Activated naive CD4-positive, alpha-beta T cell treated with anti-CD3 and anti-CD28 coated beads for 36 hours (primary cell): ENCODE measurements at regions of chr2 and their contacts with region 1.

Region 1: GRCh38 chr2:218269899-218270720 is at the starts of genes AAMP and PNKD:
- DNase-seq: peak; percentile 100
- H3K4me3 Mint-ChIP-seq: peak within 1 kb of the TSS; percentile 80
- H3K27ac Mint-ChIP-seq: peak within 1 kb of the TSS; percentile 87
- H3K4me1 Mint-ChIP-seq: peaks cover 42% of the 10 kb centered on the region
- H3K27me3 Mint-ChIP-seq: no peaks in the 10 kb centered on the region
- total RNA-seq, gene AAMP: 58.7 to 59.4 TPM
- total RNA-seq, gene PNKD: 20.4 to 21.4 TPM

Region 2: DNA sequence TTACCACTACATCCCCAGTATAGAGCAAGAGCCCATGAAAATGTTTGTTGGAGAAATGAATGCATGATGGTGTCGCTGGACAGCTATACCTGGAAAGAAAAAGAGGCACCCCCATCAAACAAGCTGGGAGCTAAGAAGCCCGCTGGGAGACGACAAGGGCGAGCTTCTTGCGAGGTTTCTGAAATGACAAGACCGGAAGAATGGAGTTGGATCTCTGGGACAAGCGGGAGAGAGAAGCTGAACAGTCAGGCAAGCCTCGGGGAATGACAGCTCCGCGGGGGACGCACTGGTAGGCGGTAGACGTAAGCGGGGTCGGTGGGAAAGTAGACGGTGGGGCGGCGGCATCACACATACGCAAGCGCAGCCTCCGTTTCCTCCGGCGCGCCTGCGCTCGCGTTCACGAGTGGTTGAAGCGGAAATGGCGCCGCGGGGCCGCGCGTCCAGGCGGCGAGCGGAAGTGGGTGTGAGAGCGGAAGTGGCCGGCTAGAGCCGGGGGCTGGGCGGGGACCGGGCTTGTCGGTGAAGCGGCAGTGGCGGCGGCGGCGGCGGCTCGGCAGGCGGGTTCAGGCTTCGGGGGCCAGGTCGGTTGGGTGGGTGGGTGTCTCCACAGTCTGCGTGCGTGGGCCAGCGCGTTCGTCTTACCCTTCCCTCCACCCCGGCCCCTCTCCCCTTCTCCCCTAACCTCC is 53.3 kb before region 1 on chr2 and contains the start of gene ARPC2:
- CTCF ChIA-PET with region 1: interaction called, 7 read pairs
- intact Hi-C with region 1: loop called (anchors 1 kb)
- DNase-seq: peak; percentile 95
- H3K4me3 Mint-ChIP-seq: peak within 1 kb of the TSS; percentile 78
- H3K27ac Mint-ChIP-seq: peak within 1 kb of the TSS; percentile 88
- H3K4me1 Mint-ChIP-seq: peaks cover 29% of the 10 kb centered on the region
- H3K27me3 Mint-ChIP-seq: no peaks in the 10 kb centered on the region
- total RNA-seq, gene ARPC2: 461 to 475 TPM

Region 3: DNA sequence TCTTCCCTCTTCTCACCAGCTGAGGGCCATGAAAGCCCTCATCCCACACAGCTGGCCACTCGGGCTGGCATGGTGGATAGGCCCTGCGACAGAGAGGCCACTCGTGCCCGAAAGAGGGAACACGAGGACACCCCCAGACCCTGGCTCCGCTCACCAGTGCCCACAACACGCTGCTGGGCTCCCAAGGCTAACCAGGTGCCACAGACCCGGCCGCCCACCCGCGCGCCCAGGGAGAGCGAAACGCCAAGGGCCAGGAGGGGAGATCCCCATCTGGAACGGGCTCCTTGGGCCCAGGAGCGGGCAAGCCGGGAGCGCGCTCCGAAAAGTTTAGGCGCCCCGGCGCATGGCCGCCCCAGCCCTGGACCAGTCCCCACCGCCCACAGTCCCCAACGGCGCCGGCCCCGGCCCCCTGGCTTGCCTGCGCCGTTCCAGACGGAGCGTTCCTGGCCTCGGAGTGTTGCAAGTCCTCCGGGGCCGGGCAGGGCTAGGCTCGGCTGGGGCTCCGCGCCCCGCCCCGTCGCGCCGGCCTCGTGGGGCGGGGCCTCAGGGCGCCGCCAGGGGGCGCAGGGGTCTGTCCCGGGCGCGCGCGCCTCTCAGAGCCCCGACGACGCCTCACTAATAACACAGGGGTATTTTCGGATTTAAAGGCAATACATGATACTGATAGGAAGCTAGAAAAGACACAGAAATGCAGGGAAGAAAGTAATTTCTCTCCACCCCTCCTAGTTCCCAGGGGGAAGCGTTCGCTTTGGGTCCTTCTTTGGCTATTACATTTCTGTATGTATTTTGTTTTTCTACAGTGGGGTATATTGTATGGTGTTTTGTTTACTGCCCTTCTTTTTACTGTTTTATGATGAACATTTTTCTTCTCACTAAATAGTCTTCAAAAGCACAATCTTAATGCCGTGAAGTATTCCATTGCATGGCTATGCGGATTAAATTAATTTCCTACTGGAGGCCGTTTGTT is 22.2 kb after region 1 on chr2 and contains the start of gene TMBIM1:
- CTCF ChIA-PET with region 1: interaction called, 214 read pairs
- intact Hi-C with region 1: loop called (anchors 1 kb)
- DNase-seq: peak; percentile 75
- H3K4me3 Mint-ChIP-seq: peak within 1 kb of the TSS; percentile 78
- H3K27ac Mint-ChIP-seq: peak within 1 kb of the TSS; percentile 94
- H3K4me1 Mint-ChIP-seq: peaks cover 46% of the 10 kb centered on the region
- H3K27me3 Mint-ChIP-seq: no peaks in the 10 kb centered on the region
- total RNA-seq, gene TMBIM1: 43.1 to 43.4 TPM

Region 4: GRCh38 chr2:218395797-218396687 is 125.9 kb after region 1 on chr2:
- CTCF ChIA-PET with region 1: interaction called, 5 read pairs
- intact Hi-C with region 1: loop called (anchors 1 kb)
- DNase-seq: peak; percentile 95
- H3K4me3 Mint-ChIP-seq: peak overlapping the region; percentile 88
- H3K27ac Mint-ChIP-seq: peak overlapping the region; percentile 92
- H3K4me1 Mint-ChIP-seq: peaks cover 25% of the 10 kb centered on the region
- H3K27me3 Mint-ChIP-seq: peaks cover 11% of the 10 kb centered on the region

Region 5: DNA sequence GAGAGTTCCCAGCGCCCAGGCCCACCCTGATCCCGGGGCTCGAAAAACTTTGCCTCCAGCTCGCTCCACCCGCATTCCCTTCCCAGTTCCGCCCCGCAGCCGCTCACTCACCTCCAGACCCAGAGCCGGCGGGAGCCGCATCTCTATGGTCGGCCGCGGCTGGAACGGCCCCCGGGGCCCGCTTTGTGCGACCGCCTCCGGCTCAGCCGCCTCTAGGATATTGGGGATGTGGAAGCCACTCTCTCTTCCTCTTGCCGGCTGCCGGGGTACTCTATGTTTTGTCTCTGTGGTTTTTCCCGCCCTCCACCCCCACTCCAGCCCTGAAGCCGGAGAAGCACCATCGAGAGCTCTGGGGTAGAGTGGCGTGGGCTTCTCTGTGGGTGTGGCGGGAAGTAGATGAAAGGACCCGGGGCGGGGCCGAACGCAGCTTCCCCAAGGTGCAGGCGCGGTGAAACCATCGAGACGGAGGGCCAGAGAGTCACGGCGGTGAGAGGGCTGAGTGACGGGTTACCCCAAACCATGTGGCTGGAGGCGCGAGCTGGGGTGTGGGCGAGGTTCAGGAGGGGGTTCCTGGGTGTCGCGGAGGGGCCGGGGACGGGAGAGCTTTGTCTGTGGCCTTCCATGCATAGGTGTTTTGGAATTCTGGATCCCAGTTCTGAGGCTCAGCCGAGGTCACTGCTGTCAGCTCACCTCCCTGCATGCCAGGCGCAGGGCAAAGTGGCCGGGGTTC is 389.3 kb after region 1 on chr2 and contains the starts of genes BCS1L and ZNF142:
- CTCF ChIA-PET with region 1: no interaction called
- intact Hi-C with region 1: loop called (anchors 1 kb)
- DNase-seq: peak; percentile 98
- H3K4me3 Mint-ChIP-seq: peak within 1 kb of the TSS; percentile 90
- H3K27ac Mint-ChIP-seq: peak within 1 kb of the TSS; percentile 81
- H3K4me1 Mint-ChIP-seq: peaks cover 40% of the 10 kb centered on the region
- H3K27me3 Mint-ChIP-seq: no peaks in the 10 kb centered on the region
- total RNA-seq, gene BCS1L: 61.3 to 63.6 TPM
- total RNA-seq, gene ZNF142: 28.0 to 28.4 TPM

Region 6: GRCh38 chr2:218898109-218898878 is 628.2 kb after region 1 on chr2:
- CTCF ChIA-PET with region 1: no interaction called
- intact Hi-C with region 1: loop called (anchors 5 kb)
- DNase-seq: peak; percentile 82
- H3K4me3 Mint-ChIP-seq: peak overlapping the region; percentile 45
- H3K27ac Mint-ChIP-seq: no peak overlapping the region
- H3K4me1 Mint-ChIP-seq: peaks cover 42% of the 10 kb centered on the region
- H3K27me3 Mint-ChIP-seq: peaks cover 27% of the 10 kb centered on the region